ENCODE measurements at regions of chr7 and their contacts with region 1.

Region 1: GRCh38 chr7:77940647-77941046 is 142.1 kb downstream of the PHTF2 start:
- DNase-seq: peak; percentile 47
- H3K4me3 ChIP-seq: no peak overlapping the region
- H3K27ac ChIP-seq: no peak overlapping the region
- H3K4me1 ChIP-seq: peaks cover 2% of the 10 kb centered on the region
- H3K27me3 ChIP-seq: no peaks in the 10 kb centered on the region
- CTCF ChIP-seq: peak; percentile 33 to 49
- POLR2A ChIP-seq: no peak

Region 2: GRCh38 chr7:77759294-77759889 is 181.3 kb before region 1 on chr7:
- CTCF ChIA-PET with region 1: interaction called, 4 read pairs
- POLR2A ChIA-PET with region 1: no interaction called
- dilution Hi-C with region 1: no loop called
- intact Hi-C with region 1: loop called (anchors 1 kb)
- DNase-seq: peak; percentile 82
- H3K4me3 ChIP-seq: no peak overlapping the region
- H3K27ac ChIP-seq: no peak overlapping the region
- H3K4me1 ChIP-seq: no peaks in the 10 kb centered on the region
- H3K27me3 ChIP-seq: no peaks in the 10 kb centered on the region
- CTCF ChIP-seq: peak; percentile 55 to 66
- POLR2A ChIP-seq: no peak

Region 3: GRCh38 chr7:78020136-78020873 is 79.7 kb after region 1 on chr7:
- CTCF ChIA-PET with region 1: interaction called, 12 read pairs
- POLR2A ChIA-PET with region 1: no interaction called
- dilution Hi-C with region 1: no loop called
- intact Hi-C with region 1: loop called (anchors 1 kb)
- DNase-seq: peak; percentile 80
- H3K4me3 ChIP-seq: peak overlapping the region in 2 of 3 experiments; percentile 33 to 41
- H3K27ac ChIP-seq: peak overlapping the region; percentile 28
- H3K4me1 ChIP-seq: peaks cover 11% of the 10 kb centered on the region
- H3K27me3 ChIP-seq: peaks cover 9 to 15% of the 10 kb centered on the region in 2 experiments
- CTCF ChIP-seq: peak; percentile 57 to 65
- POLR2A ChIP-seq: no peak

Region 4: DNA sequence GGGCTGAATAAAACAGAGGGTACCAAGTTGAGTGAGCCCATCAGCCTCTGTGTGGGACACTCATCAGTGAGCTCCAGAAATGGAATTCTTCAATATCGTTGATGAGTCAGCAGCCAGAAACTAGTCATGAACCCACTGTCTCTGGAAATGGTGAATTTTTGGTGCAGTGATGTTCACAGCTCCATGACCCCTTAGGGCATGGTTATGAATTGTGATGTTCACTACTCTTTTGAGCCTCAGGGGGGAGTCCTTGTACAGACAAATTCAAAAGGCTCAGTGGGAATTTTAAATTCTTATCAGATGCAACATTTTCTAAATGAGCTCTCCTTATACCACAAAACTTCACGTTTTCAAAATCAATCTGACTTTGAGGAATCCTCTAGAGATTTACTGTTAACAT is 193.6 kb after region 1 on chr7:
- CTCF ChIA-PET with region 1: interaction called, 13 read pairs
- POLR2A ChIA-PET with region 1: no interaction called
- dilution Hi-C with region 1: no loop called
- intact Hi-C with region 1: no loop called
- DNase-seq: peak; percentile 24
- H3K4me3 ChIP-seq: no peak overlapping the region
- H3K27ac ChIP-seq: no peak overlapping the region
- H3K4me1 ChIP-seq: no peaks in the 10 kb centered on the region
- H3K27me3 ChIP-seq: no peaks in the 10 kb centered on the region
- CTCF ChIP-seq: peak; percentile 31 to 36
- POLR2A ChIP-seq: no peak

Region 5: DNA sequence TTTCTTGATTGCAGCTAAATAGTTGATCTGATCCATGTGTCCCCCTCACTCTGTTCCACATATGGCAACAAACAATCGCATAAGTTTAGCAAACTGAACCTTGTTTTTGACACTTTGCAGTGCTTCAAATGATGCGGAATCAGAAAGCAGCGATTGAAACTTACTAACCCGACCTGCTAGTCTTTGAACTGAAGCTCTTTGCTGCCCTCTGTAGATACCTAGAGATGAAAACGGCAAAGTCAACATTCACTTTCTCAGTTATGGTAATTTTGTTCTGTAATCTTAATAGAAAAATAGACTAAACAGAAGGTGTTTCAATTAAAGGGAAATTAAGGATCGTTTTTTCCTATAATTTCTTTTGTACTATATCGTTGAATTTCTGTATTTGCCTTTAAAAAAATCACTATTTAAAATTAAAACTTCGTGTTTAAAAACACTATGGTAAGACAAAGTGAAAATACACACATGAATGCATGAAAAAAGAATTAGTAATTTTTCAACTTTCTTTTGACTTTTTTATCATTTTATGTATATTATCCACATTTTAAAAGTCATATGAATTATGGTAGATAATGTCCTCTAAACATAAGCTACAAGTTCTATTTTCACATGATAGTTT is 1236.3 kb after region 1 on chr7:
- CTCF ChIA-PET with region 1: interaction called, 3 read pairs
- POLR2A ChIA-PET with region 1: no interaction called
- dilution Hi-C with region 1: no loop called
- intact Hi-C with region 1: loop called (anchors 10 kb)
- DNase-seq: peak; percentile 53
- H3K4me3 ChIP-seq: no peak overlapping the region
- H3K27ac ChIP-seq: no peak overlapping the region
- H3K4me1 ChIP-seq: no peaks in the 10 kb centered on the region
- H3K27me3 ChIP-seq: no peaks in the 10 kb centered on the region
- CTCF ChIP-seq: peak; percentile 48 to 50
- POLR2A ChIP-seq: no peak